Gastrocnemius medialis (tissue), 4 donors: ENCODE measurements at regions of chr13 and their contacts with region 1.

Region 1: GRCh38 chr13:29472332-29472961 is 123.0 kb downstream of the SLC7A1 start:
- DNase-seq: no peak
- ATAC-seq: no peak
- H3K4me3 ChIP-seq: no peak overlapping the region
- H3K27ac ChIP-seq: no peak overlapping the region
- H3K4me1 ChIP-seq: no peaks in the 10 kb centered on the region
- H3K27me3 ChIP-seq: no peaks in the 10 kb centered on the region
- CTCF ChIP-seq: peak; percentile 48 to 69 (median 63)
- POLR2A ChIP-seq: no peak

Region 2: DNA sequence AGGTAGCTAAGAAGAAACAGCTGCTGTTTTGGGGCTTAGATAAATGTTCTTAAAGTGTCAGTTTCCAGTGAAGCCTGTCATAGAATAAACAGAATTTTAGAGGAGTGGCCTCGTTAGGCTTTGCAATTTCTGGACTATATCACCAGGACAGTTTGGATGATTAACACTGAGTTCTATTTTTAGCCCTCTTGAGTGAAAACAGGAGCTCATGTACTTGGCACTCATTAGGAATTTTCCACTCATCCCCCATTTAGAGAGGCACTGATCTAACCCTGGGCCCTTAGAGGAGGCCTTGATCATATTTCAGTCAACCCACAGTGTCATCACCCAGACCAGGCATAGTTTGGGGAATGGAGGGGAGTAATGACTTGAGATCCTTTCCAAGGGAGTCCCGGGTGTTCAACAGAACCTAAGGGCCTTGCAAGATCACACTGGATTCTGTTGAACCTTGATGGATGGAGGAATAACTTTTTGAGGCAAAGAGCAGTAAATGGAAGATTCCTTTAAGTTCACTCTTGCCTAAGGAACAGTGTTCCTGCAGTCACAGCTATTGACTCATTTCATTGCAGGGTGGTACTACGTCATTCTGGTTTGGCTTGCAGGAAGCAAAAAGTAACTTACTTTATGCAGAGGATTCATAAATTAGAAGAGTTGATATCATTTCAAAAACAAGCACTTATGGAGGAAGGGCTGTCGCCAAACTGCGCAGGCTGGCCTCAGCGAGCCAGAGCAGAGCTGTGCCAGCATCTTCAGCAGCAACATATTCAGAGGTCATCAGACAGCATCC is 37.1 kb before region 1 on chr13:
- in situ Hi-C with region 1: no loop called
- intact Hi-C with region 1: loop called (anchors 5 kb)
- DNase-seq: peak; percentile 26 to 37
- ATAC-seq: peak; percentile 93 to 94
- H3K4me3 ChIP-seq: peak overlapping the region in 1 of 4 donors; percentile 12
- H3K27ac ChIP-seq: peak overlapping the region; percentile 29 to 84 (median 72)
- H3K4me1 ChIP-seq: peaks cover 26 to 57% of the 10 kb centered on the region in 2 donors
- H3K27me3 ChIP-seq: no peaks in the 10 kb centered on the region
- CTCF ChIP-seq: no peak
- POLR2A ChIP-seq: no peak

Region 3: DNA sequence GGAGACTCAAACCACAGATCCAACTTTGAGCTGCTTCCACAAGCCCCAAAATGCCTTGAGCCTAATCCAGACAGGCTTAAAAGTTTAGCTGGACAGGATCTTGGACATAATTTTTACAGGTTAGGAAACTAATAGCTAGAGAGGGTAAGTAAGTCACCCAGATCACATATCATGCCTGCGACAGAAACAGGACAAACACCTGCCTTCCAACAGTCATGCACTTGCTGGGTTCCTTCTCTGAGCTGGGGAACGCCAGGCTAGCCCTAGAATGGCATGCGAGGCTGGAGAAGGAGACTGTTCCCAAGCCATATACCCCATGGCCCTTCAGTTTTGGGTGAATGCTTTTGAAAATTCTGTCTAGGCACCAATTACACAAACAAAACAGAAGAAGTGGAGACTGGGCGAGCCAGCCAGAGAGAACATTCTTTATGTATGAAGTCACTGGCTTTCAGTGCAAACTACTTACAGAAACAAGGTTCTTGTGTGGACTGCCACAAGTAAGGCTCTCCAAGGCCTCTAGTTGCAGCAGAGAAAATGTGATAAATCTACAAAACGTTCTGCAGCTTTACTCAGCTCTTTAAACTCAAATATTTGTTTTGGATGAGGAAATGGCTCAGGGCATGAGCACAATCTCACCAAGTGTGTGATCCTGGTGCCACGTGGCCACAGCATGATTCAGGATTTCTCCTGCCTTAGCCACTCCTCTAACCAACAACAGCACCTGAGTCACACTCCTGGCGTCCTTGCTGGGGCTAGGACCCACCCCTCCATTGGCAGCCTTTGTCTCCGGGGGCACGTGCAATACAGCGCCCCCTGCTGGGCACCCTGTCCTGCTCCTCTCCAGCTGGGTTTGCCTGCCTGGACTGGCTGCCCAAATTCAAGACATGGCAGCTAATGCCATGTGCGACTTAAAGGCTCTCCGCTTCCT is 451.4 kb after region 1 on chr13:
- in situ Hi-C with region 1: no loop called
- intact Hi-C with region 1: no loop called
- DNase-seq: peak; percentile 16 to 60
- ATAC-seq: peak; percentile 58 to 79
- H3K4me3 ChIP-seq: no peak overlapping the region
- H3K27ac ChIP-seq: peak overlapping the region; percentile 49 to 73 (median 50)
- H3K4me1 ChIP-seq: peaks cover 21 to 26% of the 10 kb centered on the region in 2 donors
- H3K27me3 ChIP-seq: no peaks in the 10 kb centered on the region
- CTCF ChIP-seq: peak; percentile 39 to 74 (median 58)
- POLR2A ChIP-seq: no peak